Upper lobe of right lung (tissue), 1 donor: ENCODE measurements at regions of chr1 and their contacts with region 1.

Region 1: GRCh38 chr1:235099001-235099400 is 29.6 kb downstream of the TOMM20 start:
- DNase-seq: no peak
- ATAC-seq: no peak
- H3K4me3 ChIP-seq: no peak overlapping the region
- H3K27ac ChIP-seq: no peak overlapping the region
- H3K4me1 ChIP-seq: no peaks in the 10 kb centered on the region
- H3K27me3 ChIP-seq: no peaks in the 10 kb centered on the region
- CTCF ChIP-seq: no peak

Region 2: GRCh38 chr1:234486498-234487448 is 612.2 kb before region 1 on chr1:
- intact Hi-C with region 1: loop called (anchors 5 kb)
- DNase-seq: no peak
- ATAC-seq: peak; percentile 85
- H3K4me3 ChIP-seq: no peak overlapping the region
- H3K27ac ChIP-seq: no peak overlapping the region
- H3K4me1 ChIP-seq: peaks cover 9% of the 10 kb centered on the region
- H3K27me3 ChIP-seq: no peaks in the 10 kb centered on the region
- CTCF ChIP-seq: peak; percentile 65

Region 3: GRCh38 chr1:235011599-235012435 is 87.2 kb before region 1 on chr1:
- intact Hi-C with region 1: no loop called
- DNase-seq: peak; percentile 74
- ATAC-seq: peak; percentile 88
- H3K4me3 ChIP-seq: no peak overlapping the region
- H3K27ac ChIP-seq: peak overlapping the region; percentile 63
- H3K4me1 ChIP-seq: peaks cover 13% of the 10 kb centered on the region
- H3K27me3 ChIP-seq: no peaks in the 10 kb centered on the region
- CTCF ChIP-seq: no peak